Right ventricle myocardium inferior (tissue), 1 donor: ENCODE measurements at regions of chr2 and their contacts with region 1.

Region 1: GRCh38 chr2:190781604-190782198 is 98.9 kb upstream of the GLS start:
- DNase-seq: no peak
- ATAC-seq: no peak

Region 2: GRCh38 chr2:191030521-191031154 is 248.9 kb after region 1 on chr2:
- intact Hi-C with region 1: loop called (anchors 2 kb)
- DNase-seq: no peak
- ATAC-seq: no peak

Region 3: GRCh38 chr2:191150600-191151330 is 369.1 kb after region 1 on chr2 and contains the start of gene STAT4:
- intact Hi-C with region 1: loop called (anchors 10 kb)
- DNase-seq: peak; percentile 77
- ATAC-seq: peak; percentile 43
- total RNA-seq, gene STAT4: 0.76 TPM